CD8-positive, alpha-beta memory T cell (primary cell): ENCODE measurements at regions of chr15 and their contacts with region 1.

Region 1: GRCh38 chr15:93048759-93049161 is 40.3 kb downstream of the RGMA start:
- DNase-seq: no peak
- H3K4me3 ChIP-seq: no peak overlapping the region
- H3K4me3 Mint-ChIP-seq: peak overlapping the region in 4 of 7 donors; percentile 1 to 58 (median 22)
- H3K27ac ChIP-seq: no peak overlapping the region
- H3K27ac Mint-ChIP-seq: peak overlapping the region in 6 of 8 donors; percentile 15 to 93 (median 74)
- H3K4me1 ChIP-seq: peaks cover 25% of the 10 kb centered on the region
- H3K4me1 Mint-ChIP-seq: peaks cover 45 to 55% (median 45%) of the 10 kb centered on the region in 3 donors
- H3K27me3 ChIP-seq: no peaks in the 10 kb centered on the region
- H3K27me3 Mint-ChIP-seq: peaks cover 0 to 6% of the 10 kb centered on the region in 2 donors

Region 2: DNA sequence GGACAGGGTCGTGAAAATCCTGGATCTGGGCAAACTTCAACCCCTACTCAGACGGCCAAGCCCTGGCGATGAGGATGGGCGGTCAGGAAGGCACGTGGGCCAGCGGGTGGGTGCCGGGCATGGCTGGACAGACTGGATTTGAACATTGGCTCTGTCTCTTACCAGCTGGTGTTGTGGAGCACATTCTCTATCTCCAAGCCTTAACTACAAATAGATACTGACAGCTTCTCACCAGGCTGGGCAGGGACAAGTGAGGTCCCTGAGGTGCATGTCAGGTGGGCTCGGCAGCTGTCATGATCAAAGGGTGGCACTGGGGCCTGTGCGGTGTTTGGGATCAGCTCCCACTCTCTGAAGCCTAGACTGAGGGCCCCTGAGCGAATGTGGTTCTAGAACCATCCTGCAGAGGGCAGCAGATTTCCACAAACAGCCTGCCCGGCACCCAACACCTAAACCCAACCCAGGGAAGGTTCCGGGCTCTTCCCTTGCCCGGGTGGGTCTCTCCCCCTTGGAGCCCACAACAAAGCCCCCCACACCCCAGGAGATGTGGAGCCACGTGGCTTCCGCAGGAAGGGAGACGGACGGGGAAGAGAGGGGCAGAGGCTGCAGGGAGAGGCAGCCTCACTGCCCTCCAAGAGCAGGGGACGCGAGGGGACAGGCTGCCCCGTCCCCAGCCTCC is 18.2 kb before region 1 on chr15:
- CTCF ChIA-PET with region 1: interaction called, 34 read pairs
- POLR2A ChIA-PET with region 1: interaction called, 5 read pairs
- DNase-seq: peak; percentile 51 to 73 (median 54)
- H3K4me3 ChIP-seq: no peak overlapping the region
- H3K4me3 Mint-ChIP-seq: peak overlapping the region in 1 of 7 donors; percentile 5
- H3K27ac ChIP-seq: no peak overlapping the region
- H3K27ac Mint-ChIP-seq: peak overlapping the region; percentile 12 to 86 (median 70)
- H3K4me1 ChIP-seq: peaks cover 8% of the 10 kb centered on the region
- H3K4me1 Mint-ChIP-seq: peaks cover 18 to 40% (median 39%) of the 10 kb centered on the region in 3 donors
- H3K27me3 ChIP-seq: no peaks in the 10 kb centered on the region
- H3K27me3 Mint-ChIP-seq: peaks cover 0 to 4% of the 10 kb centered on the region in 2 donors

Region 3: GRCh38 chr15:93035953-93036800 is 12.6 kb before region 1 on chr15:
- CTCF ChIA-PET with region 1: interaction called, 34 read pairs
- POLR2A ChIA-PET with region 1: interaction called, 5 read pairs
- DNase-seq: peak; percentile 21 to 70 (median 27)
- H3K4me3 ChIP-seq: peak overlapping the region; percentile 7
- H3K4me3 Mint-ChIP-seq: peak overlapping the region in 6 of 7 donors; percentile 33 to 87 (median 76)
- H3K27ac ChIP-seq: no peak overlapping the region
- H3K27ac Mint-ChIP-seq: peak overlapping the region in 5 of 8 donors; percentile 57 to 92 (median 70)
- H3K4me1 ChIP-seq: peaks cover 10% of the 10 kb centered on the region
- H3K4me1 Mint-ChIP-seq: peaks cover 8 to 13% (median 8%) of the 10 kb centered on the region in 3 donors
- H3K27me3 ChIP-seq: no peaks in the 10 kb centered on the region
- H3K27me3 Mint-ChIP-seq: peaks cover 2 to 3% of the 10 kb centered on the region in 2 donors

Region 4: DNA sequence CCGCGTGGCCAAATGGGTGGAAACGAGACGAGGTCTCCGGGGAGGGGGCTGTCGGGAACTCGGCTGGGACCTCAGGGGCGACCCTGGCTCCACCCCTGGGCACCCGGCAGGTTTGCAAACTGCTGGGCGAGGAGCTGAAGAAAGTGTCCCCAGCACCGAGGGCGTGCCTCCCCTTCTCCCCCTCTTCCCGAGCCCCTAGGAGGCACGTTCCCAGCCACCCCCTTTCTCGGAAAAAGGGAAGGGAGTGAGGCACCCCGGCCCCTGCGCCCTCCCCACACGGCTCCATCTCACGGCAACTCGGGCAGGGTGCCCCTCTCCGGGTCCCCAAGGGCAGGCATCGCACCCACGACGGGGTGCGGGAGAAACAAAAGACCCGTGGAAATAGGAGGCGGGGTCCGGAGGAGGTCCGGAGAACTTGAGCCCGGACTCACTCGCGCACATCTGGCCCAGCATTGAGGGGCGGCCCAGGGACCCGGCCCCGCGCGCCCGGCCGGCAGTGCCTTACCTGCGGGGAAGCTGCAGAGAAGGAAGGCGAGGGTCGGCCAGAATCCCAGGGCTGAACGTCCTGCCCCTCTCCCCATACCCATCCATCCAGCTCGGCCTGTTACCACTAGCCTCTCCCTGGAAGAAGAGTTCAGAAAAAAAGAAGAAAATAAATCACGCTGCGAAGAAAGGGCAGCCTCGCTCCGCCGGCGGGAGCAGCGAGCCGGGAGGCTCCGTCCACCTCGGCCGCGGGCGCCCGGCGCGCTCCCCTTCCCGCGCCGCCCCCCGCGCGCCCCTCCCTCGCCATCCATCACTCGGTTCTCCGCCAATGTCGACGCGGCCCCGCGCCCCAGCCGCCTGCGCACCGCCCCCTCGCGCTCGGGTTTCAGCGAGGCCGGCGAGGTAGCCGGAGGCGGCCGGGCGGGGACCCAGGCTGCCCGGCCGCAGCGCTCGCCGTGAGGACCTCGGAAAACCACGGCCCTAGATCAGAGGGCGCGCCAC is 23.9 kb after region 1 on chr15:
- CTCF ChIA-PET with region 1: no interaction called
- POLR2A ChIA-PET with region 1: no interaction called
- DNase-seq: no peak
- H3K4me3 ChIP-seq: no peak overlapping the region
- H3K4me3 Mint-ChIP-seq: peak overlapping the region; percentile 53 to 87 (median 76)
- H3K27ac ChIP-seq: no peak overlapping the region
- H3K27ac Mint-ChIP-seq: peak overlapping the region in 3 of 8 donors; percentile 9 to 91 (median 48)
- H3K4me1 ChIP-seq: peaks cover 8% of the 10 kb centered on the region
- H3K4me1 Mint-ChIP-seq: peaks cover 15 to 24% (median 23%) of the 10 kb centered on the region in 3 donors
- H3K27me3 ChIP-seq: peaks cover 19% of the 10 kb centered on the region
- H3K27me3 Mint-ChIP-seq: peaks cover 38 to 68% of the 10 kb centered on the region in 2 donors

Region 5: GRCh38 chr15:93109336-93110102 is 60.8 kb after region 1 on chr15:
- CTCF ChIA-PET with region 1: no interaction called
- POLR2A ChIA-PET with region 1: interaction called, 20 read pairs
- DNase-seq: no peak
- H3K4me3 ChIP-seq: no peak overlapping the region
- H3K4me3 Mint-ChIP-seq: peak overlapping the region in 6 of 7 donors; percentile 39 to 76 (median 48)
- H3K27ac ChIP-seq: no peak overlapping the region
- H3K27ac Mint-ChIP-seq: no peak overlapping the region
- H3K4me1 ChIP-seq: no peaks in the 10 kb centered on the region
- H3K4me1 Mint-ChIP-seq: peaks cover 6 to 29% (median 21%) of the 10 kb centered on the region in 3 donors
- H3K27me3 ChIP-seq: peaks cover 3% of the 10 kb centered on the region
- H3K27me3 Mint-ChIP-seq: peaks cover 50 to 59% of the 10 kb centered on the region in 2 donors